ENCODE measurements at regions of chr15 and their contacts with region 1.

Region 1: GRCh38 chr15:92808978-92809879 is 90.9 kb upstream of the CHD2 start:
- DNase-seq: peak; percentile 98
- H3K4me3 ChIP-seq: peak overlapping the region; percentile 54 to 73 (median 67)
- H3K27ac ChIP-seq: peak overlapping the region; percentile 97 to 99
- H3K4me1 ChIP-seq: peaks cover 3 to 11% of the 10 kb centered on the region in 2 donors
- H3K27me3 ChIP-seq: no peaks in the 10 kb centered on the region
- CTCF ChIP-seq: peak; percentile 69 to 99 (median 98)
- POLR2A ChIP-seq: peak; percentile 19

Region 2: DNA sequence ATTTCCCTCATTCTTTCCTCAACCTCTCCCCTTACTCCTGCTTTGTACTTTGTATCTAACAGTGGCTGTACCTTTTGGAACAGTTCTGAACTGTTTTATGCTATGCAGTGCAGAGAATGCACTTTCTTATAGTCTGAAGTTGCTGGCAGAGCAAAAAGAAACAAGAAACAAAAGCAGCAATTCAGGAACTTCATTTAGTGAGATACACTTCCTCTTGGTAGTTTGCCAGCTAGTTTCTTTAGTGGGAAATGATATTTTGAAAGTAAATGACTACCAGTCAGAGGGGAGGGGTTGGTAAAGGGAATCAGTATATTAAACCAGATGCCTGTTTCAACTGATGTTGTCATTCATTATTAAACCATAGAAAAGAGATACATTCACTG is 35.9 kb after region 1 on chr15:
- intact Hi-C with region 1: no loop called
- DNase-seq: no peak
- H3K4me3 ChIP-seq: no peak overlapping the region
- H3K27ac ChIP-seq: peak overlapping the region; percentile 68 to 82
- H3K4me1 ChIP-seq: no peaks in the 10 kb centered on the region
- H3K27me3 ChIP-seq: no peaks in the 10 kb centered on the region
- CTCF ChIP-seq: no peak
- POLR2A ChIP-seq: no peak

Region 3: GRCh38 chr15:92881802-92882696 is 72.8 kb after region 1 on chr15:
- intact Hi-C with region 1: loop called (anchors 2 kb)
- DNase-seq: peak; percentile 98 to 100
- H3K4me3 ChIP-seq: peak overlapping the region; percentile 84 to 98 (median 96)
- H3K27ac ChIP-seq: peak overlapping the region; percentile 100
- H3K4me1 ChIP-seq: peaks cover 5 to 6% of the 10 kb centered on the region in 2 donors
- H3K27me3 ChIP-seq: no peaks in the 10 kb centered on the region
- CTCF ChIP-seq: peak; percentile 12 to 23 (median 12)
- POLR2A ChIP-seq: peak; percentile 98

Region 4: DNA sequence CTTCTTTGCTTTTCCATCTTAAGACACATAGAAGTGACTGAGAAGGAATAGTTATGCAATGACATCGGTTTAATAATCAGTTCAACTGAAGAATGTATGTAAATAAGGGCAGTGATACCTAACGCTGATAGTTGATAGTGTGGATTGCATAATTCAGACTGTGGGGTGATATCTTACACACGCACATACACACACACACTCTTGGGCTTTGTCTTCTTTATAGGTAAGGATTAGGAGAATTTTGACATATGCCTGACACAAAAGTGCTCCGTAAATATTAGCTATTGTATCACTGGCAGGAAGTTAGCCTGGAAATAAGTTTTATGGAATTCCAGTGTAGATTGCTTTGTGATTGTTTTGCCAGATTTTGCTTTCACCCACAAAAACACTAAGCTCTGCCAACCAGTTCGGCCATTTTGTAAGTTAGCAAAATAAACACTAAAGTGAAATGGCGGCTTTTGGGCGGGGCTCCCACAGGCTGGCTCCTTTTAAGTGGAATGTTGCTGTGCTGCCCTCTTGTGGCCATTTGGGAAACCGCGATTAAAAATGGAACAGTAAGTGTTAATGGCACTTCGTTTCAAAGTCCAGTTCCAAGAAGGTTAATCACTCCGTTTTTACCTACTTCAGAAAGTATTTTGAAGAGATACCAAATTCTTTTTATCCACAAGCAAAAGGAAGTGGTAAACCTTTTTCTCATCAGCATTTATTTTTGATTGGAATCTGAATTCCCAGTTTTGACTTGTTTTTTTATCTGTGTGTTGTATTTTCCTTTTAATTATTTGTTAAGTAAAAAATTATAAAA is 108.6 kb after region 1 on chr15:
- intact Hi-C with region 1: loop called (anchors 10 kb)
- DNase-seq: peak; percentile 95 to 97
- H3K4me3 ChIP-seq: peak overlapping the region in 2 of 3 donors; percentile 8 to 44
- H3K27ac ChIP-seq: peak overlapping the region; percentile 90 to 99
- H3K4me1 ChIP-seq: peaks cover 0 to 45% of the 10 kb centered on the region in 2 donors
- H3K27me3 ChIP-seq: no peaks in the 10 kb centered on the region
- CTCF ChIP-seq: peak; percentile 98 to 99 (median 98)
- POLR2A ChIP-seq: no peak

Measured in breast epithelium (tissue), 4 donors.